CD4-positive, alpha-beta T cell (primary cell): ENCODE measurements at regions of chr11 and their contacts with region 1.

Region 1: DNA sequence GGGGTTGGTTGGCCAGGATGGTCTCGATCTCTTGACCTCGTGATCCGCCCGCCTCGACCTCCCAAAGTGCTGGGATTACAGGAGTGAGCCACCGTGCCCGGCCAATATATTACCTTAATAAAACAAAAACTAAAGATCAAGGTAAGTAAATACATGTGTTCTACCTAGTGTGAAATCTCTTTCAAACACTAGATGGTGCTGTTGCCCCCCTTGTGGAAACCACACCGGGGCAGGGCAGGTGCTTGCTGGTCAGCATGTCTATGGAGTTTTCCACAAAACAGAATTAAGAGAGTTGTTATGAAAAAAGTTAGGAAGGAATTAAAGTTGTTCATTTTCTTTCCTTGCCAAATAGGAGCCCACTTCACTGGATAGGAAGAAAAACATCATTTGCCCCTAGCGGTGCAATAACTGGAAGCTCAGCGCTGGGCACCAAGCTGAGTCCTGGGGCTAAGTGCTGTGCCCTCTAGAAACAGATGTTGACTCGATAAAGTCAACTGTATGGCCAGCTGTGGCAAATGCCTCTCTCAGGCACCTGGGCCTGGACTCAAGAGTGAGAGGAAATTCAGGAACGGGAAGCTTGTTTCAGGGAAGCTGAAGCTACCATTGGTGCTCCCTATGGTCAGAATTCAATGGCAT is 6.3 kb upstream of the KCNJ5 start:
- DNase-seq: peak; percentile 27 to 80 (median 40)
- ATAC-seq: peak; percentile 81
- H3K4me3 ChIP-seq: no peak overlapping the region
- H3K4me3 Mint-ChIP-seq: no peak overlapping the region
- H3K27ac ChIP-seq: no peak overlapping the region
- H3K27ac Mint-ChIP-seq: no peak overlapping the region
- H3K4me1 ChIP-seq: no peaks in the 10 kb centered on the region
- H3K4me1 Mint-ChIP-seq: peaks cover 4% of the 10 kb centered on the region
- H3K27me3 ChIP-seq: peaks cover 32 to 50% of the 10 kb centered on the region in 2 experiments
- H3K27me3 Mint-ChIP-seq: peaks cover 81% of the 10 kb centered on the region
- CTCF ChIP-seq: peak; percentile 80

Region 2: DNA sequence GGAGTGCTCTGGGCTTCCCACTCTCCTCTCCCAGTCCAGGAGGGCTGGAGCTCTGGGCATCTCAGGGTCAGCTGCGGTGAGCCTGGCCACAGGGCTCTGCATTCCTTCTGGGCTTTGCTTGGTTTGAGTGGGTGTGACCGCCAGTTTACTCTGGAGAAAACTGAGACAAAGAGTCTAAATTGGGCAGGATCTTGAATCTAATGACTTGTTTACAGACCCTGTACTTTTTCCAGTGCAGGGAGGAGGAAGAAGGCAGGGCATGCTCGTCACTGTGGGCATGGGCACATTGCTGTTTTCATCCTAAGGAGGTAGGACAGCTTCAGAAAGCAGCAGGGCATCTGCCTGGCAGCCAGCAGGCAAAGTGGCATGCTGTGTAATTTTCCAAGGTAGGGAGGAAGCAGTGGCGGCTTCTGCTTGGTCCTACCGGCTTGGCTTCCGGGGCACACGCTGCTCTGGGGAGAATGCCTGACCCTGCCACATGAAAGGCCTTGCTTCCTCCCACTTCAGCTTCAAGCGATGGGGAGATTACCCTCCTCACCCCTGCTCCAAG is 168.1 kb before region 1 on chr11:
- CTCF ChIA-PET with region 1: no interaction called
- POLR2A ChIA-PET with region 1: no interaction called
- intact Hi-C with region 1: no loop called
- DNase-seq: peak in 11 of 14 experiments; percentile 25 to 86 (median 55)
- ATAC-seq: peak; percentile 70
- H3K4me3 ChIP-seq: peak overlapping the region; percentile 27
- H3K4me3 Mint-ChIP-seq: peak overlapping the region; percentile 67
- H3K27ac ChIP-seq: peak overlapping the region; percentile 65 to 84
- H3K27ac Mint-ChIP-seq: peak overlapping the region; percentile 90
- H3K4me1 ChIP-seq: peaks cover 95% of the 10 kb centered on the region
- H3K4me1 Mint-ChIP-seq: peaks cover 100% of the 10 kb centered on the region
- H3K27me3 ChIP-seq: no peaks in the 10 kb centered on the region
- H3K27me3 Mint-ChIP-seq: no peaks in the 10 kb centered on the region
- CTCF ChIP-seq: no peak

Region 3: DNA sequence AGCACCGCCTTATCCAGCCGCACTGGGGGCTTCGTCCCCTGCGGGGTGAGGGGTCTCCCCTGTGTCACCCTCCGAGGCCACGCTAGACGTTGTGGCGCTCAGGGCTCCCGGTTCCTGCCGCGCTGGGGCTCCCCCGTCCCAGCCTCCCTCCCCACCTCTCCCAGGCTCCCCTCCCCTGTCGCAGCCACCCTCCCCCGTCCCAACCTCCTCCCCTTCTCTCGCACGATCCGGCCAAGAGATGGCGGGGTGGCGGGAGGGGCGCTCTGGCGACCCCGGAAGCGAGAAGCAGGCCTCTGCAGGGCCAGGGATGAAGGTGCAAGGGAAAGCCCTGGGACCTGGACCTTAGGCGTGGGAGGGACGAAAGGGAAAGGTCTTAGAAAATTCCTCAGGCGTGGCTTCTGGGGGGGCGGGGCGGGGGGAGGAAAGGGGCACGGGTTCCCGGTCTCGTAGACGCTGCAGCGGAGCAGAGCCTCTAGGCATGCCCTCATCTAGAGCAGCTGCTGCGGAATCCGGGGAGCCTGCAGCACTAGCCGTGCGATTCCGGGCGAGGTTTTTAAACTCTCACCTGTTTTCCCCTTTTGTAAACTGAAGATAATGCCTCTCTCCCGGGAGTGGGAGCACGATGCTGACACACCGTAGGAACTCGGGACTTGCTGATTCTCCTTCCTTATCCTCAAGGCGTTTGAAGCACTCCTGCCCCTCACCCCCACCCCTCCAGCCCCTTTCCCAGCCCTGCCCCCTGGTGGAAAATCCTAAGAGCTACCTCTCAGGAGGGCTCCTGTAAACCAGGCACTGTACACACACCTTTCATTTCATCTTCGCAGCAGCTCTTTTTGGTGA is 20.7 kb after region 1 on chr11:
- CTCF ChIA-PET with region 1: interaction called, 14 read pairs
- POLR2A ChIA-PET with region 1: interaction called, 3 read pairs
- intact Hi-C with region 1: loop called in 1 of 2 experiments (anchors 2 kb)
- DNase-seq: peak; percentile 20 to 69 (median 30)
- ATAC-seq: peak; percentile 85
- H3K4me3 ChIP-seq: peak overlapping the region; percentile 57
- H3K4me3 Mint-ChIP-seq: peak overlapping the region; percentile 86
- H3K27ac ChIP-seq: no peak overlapping the region
- H3K27ac Mint-ChIP-seq: no peak overlapping the region
- H3K4me1 ChIP-seq: peaks cover 22% of the 10 kb centered on the region
- H3K4me1 Mint-ChIP-seq: peaks cover 27% of the 10 kb centered on the region
- H3K27me3 ChIP-seq: peaks cover 17 to 29% of the 10 kb centered on the region in 2 experiments
- H3K27me3 Mint-ChIP-seq: peaks cover 58% of the 10 kb centered on the region
- CTCF ChIP-seq: peak; percentile 52